ENCODE measurements at regions of chr15 and their contacts with region 1.

Region 1: DNA sequence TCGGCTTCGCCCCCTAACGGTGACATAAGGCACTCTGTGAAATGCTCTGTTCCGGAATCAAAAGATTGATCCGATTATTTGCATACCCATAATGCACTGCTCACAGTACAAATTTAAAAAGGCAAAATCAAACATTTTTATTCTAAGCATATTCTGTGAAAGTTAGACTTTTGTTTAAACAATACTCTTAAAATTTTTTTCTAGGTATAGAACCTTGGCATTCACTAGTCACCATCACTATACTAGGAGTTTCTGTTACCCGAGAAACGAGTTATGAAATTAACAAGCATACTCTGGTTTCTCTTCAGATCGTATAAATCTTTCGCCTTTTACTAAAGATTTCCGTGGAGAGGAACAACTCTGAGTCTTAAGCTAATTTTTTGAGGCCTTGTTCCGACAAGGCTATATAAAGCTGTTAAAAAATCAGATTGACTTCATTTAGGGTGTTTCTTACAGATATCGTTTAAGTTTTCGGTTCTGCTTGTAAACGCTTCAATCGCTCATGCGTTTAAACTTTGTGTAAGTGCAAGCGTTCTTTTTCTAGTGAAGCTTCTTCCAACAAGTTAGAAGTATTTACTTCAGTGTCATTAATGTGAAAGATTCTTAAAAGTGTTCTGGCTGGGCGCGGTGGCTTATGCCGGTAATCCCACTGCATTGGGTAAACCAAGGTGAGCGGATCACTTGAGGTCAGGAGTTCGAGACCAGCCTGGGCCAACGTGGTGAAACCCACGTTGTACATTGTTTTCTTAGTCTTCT is at the start of gene RNU5B-1:
- DNase-seq: peak; percentile 87
- ATAC-seq: peak; percentile 75
- H3K4me3 Mint-ChIP-seq: peak within 1 kb of the TSS; percentile 89
- H3K27ac Mint-ChIP-seq: peak within 1 kb of the TSS; percentile 98
- H3K4me1 Mint-ChIP-seq: peaks cover 36% of the 10 kb centered on the region
- H3K27me3 Mint-ChIP-seq: no peaks in the 10 kb centered on the region
- total RNA-seq, gene RNU5B-1: not detected

Region 2: GRCh38 chr15:64893481-64894394 is 410.8 kb before region 1 on chr15:
- CTCF ChIA-PET with region 1: no interaction called
- POLR2A ChIA-PET with region 1: interaction called, 15 read pairs
- intact Hi-C with region 1: loop called (anchors 2 to 5 kb)
- DNase-seq: peak; percentile 99
- ATAC-seq: peak; percentile 84
- H3K4me3 Mint-ChIP-seq: peak overlapping the region; percentile 94
- H3K27ac Mint-ChIP-seq: peak overlapping the region; percentile 93
- H3K4me1 Mint-ChIP-seq: peaks cover 54% of the 10 kb centered on the region
- H3K27me3 Mint-ChIP-seq: no peaks in the 10 kb centered on the region

Region 3: DNA sequence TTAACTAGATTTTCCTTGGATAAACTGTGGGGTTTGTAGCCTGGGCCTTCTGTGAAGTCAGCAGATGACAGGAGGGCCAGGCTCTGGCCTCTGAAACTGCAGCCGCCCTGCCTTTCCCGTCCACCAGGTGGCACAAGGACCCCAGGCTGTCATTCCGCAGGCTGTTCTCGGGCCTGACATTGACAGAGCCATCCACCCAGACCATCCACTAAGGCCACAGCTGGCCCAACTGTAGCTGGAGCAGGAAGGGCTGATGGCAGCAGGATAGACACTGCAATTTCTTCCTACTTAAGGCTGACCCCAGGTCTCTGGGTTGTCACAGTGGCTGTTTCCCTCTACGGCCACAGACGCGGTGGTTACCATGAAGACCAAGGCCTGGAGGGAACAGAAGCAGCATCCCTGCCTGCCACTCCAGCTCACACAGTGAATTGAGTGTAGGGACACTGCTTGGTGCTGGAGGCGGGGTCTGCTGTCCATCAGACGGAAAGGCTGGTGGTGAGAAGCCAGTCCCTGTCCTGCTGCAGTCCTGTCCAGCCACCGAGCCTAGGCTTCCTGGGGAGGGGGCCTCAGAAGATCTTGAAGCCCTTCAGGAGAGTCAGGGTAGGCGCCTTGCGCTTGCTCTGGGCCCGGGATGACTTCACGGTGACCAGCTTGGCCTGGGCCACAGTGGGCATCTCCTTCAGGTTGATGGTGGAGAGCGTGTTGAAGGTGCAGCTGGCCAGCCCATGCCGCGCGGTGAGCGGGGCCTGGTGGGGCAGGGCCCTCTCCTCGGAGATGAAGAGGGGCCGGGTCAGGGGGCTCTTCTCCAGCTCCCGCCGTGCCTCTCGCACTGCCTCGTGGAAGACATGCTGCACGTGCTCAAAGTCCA is 250.0 kb before region 1 on chr15:
- CTCF ChIA-PET with region 1: interaction called, 5 read pairs
- POLR2A ChIA-PET with region 1: interaction called, 3 read pairs
- intact Hi-C with region 1: loop called (anchors 1 to 2 kb)
- DNase-seq: peak; percentile 79
- ATAC-seq: peak; percentile 57
- H3K4me3 Mint-ChIP-seq: no peak overlapping the region
- H3K27ac Mint-ChIP-seq: no peak overlapping the region
- H3K4me1 Mint-ChIP-seq: peaks cover 10% of the 10 kb centered on the region
- H3K27me3 Mint-ChIP-seq: no peaks in the 10 kb centered on the region

Region 4: GRCh38 chr15:65249641-65250040 is 54.9 kb before region 1 on chr15:
- CTCF ChIA-PET with region 1: no interaction called
- POLR2A ChIA-PET with region 1: interaction called, 27 read pairs
- intact Hi-C with region 1: no loop called
- DNase-seq: peak; percentile 92
- ATAC-seq: peak; percentile 99
- H3K4me3 Mint-ChIP-seq: peak overlapping the region; percentile 15
- H3K27ac Mint-ChIP-seq: peak overlapping the region; percentile 90
- H3K4me1 Mint-ChIP-seq: peaks cover 24% of the 10 kb centered on the region
- H3K27me3 Mint-ChIP-seq: no peaks in the 10 kb centered on the region

Region 5: DNA sequence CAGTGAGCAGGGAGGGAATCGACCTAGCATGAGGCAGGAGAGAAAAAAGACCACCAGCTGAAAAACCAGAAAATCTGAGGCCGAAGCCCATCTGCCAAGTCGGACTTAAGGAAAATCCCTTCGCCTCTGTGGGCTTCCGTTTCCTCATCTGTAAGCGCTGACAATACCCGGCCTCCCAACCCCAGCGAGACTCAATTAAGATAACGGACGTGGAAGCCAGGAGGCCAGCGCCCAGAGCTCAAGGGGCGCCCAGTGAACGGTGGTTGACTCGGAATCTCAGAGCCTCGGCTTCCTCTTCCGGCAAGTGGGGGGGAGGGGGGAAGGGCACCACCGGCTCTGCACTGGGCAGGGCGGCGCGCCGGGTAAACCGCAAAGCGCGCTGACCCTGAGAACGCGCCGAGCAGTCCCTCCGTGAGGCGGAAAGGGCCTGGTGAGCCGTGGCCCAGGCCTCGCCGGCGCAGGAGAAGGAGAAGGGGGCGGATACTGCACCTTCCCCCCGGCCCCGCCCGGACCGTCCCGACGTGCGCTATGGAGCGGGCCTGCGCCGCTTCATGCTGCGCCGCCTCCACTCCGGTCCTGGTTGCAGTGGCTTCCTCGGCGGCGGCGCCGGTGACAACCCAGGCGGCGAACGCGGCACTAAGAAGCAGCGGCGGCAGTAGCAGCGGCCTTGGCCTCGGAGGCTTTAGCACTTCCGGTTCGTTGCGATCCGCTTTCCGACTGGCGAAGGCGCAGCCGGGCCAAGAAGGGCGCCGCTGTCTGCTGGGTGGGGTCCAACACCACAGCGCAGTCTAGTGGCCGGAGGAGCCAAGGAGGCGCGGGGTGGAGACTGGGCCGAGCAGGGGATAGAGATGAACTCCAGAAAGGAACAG is 212.7 kb after region 1 on chr15 and contains the start of gene DPP8:
- CTCF ChIA-PET with region 1: no interaction called
- POLR2A ChIA-PET with region 1: interaction called, 5 read pairs
- intact Hi-C with region 1: loop called in 1 of 2 experiments (anchors 1 kb)
- DNase-seq: peak; percentile 97
- ATAC-seq: peak; percentile 97
- H3K4me3 Mint-ChIP-seq: peak within 1 kb of the TSS; percentile 91
- H3K27ac Mint-ChIP-seq: peak within 1 kb of the TSS; percentile 88
- H3K4me1 Mint-ChIP-seq: peaks cover 36% of the 10 kb centered on the region
- H3K27me3 Mint-ChIP-seq: no peaks in the 10 kb centered on the region
- total RNA-seq, gene DPP8: 25.8 to 26.4 TPM

Region 6: GRCh38 chr15:65869127-65869953 is 564.8 kb after region 1 on chr15 and contains the start of gene RAB11A:
- CTCF ChIA-PET with region 1: no interaction called
- POLR2A ChIA-PET with region 1: interaction called, 17 read pairs
- intact Hi-C with region 1: loop called in 1 of 2 experiments (anchors 2 kb)
- DNase-seq: peak; percentile 97
- ATAC-seq: peak; percentile 92
- H3K4me3 Mint-ChIP-seq: peak within 1 kb of the TSS; percentile 99
- H3K27ac Mint-ChIP-seq: peak within 1 kb of the TSS; percentile 91
- H3K4me1 Mint-ChIP-seq: peaks cover 30% of the 10 kb centered on the region
- H3K27me3 Mint-ChIP-seq: no peaks in the 10 kb centered on the region
- total RNA-seq, gene RAB11A: 129 to 142 TPM

Measured in activated CD4-positive, alpha-beta T cell treated with anti-CD3 and anti-CD28 coated beads for 36 hours (primary cell).